Left colon (tissue), 2 donors: ENCODE measurements at regions of chr7 and their contacts with region 1.

Region 1: DNA sequence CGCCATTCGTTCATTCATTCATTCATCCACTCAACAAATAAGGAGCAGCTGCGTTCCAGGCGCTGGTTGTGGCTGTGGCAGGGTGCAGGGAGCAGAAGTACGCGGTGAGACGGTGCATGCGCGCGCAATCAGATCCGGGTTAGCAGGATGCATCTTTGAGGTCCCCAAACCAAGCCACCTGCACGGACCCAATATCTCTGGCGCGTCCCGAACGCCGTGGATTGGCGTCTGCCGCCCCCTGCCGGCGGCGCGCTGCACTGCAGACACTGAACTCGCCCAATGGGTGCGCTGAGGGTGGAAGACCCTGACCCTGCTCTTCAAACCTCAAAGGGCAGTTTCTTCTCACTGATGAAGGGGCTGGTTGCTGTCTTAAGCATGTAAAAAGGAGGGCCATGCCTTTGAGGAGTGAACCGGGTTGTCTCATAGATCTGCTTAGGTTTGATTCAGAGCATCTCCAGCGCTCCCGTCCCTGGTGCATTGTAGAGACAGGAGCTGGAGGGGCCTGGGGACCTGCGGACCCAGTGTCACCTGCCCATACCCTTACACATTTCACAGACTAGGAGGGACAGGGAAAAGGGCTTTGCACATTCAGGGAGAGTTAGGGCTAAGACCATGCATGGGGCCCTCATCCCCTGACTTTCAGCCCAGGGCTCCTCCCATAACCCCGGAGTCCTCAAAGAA is 102.5 kb downstream of the RAMP3 start:
- DNase-seq: peak in 1 of 2 donors; percentile 61
- ATAC-seq: peak; percentile 62

Region 2: DNA sequence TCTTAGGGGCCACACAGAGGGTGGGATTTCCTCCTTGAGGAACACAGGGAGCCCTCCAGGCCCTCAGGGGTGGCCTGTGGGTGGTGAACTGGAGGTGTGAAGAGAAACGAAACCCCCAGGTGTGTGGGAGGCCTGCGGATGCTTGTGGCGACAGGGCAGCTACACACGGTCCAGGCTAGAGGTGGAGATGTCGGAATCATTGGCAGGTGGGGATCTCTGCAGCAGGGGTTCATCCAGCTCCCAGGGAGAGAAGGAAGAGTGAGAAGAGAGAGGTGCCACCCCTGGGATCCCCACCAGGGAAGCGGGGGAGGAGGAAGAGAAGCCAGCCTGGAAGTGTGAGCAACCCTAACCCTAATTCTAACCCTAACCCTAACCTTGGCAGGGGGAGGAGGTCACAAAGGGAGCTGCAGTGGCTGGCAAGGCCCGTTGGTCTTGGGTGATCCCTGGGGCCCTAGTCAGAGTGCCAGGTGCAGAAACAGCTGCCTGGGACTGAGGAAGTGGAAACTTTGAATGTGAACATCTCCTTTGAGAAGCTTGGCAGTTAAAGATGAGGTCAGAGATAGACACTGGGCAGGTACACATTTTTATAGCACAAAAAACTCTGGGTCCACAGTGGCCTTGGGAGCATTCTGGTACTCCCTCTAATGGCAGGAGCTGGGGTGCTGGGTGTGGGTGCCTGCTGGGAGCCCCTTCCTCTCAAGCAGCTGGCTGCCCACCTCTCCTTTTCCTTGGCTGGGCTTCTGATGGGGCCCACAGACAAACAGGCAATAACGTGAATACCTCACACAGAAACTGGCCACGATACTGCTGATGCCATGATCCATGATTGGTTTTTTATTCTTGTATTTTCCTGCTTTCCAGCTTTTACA is 1162.8 kb before region 1 on chr7:
- intact Hi-C with region 1: no loop called
- DNase-seq: no peak
- ATAC-seq: no peak

Region 3: GRCh38 chr7:45157653-45158401 is 102.3 kb before region 1 on chr7 and contains the start of gene RAMP3:
- intact Hi-C with region 1: loop called (anchors 2 to 5 kb)
- DNase-seq: no peak
- ATAC-seq: no peak
- total RNA-seq, gene RAMP3: 8.8 to 9.5 TPM

Region 4: GRCh38 chr7:45347804-45348412 is 87.8 kb after region 1 on chr7:
- intact Hi-C with region 1: no loop called
- DNase-seq: no peak
- ATAC-seq: no peak